Right ventricle myocardium inferior (tissue), 1 donor: ENCODE measurements at regions of chr15 and their contacts with region 1.

Region 1: GRCh38 chr15:38817427-38818156 is 253.0 kb upstream of the RASGRP1 start:
- DNase-seq: peak; percentile 91
- ATAC-seq: peak; percentile 94

Region 2: GRCh38 chr15:38991126-38991525 is 173.5 kb after region 1 on chr15:
- intact Hi-C with region 1: loop called (anchors 5 kb)
- DNase-seq: no peak
- ATAC-seq: no peak

Region 3: GRCh38 chr15:39028069-39028468 is 210.5 kb after region 1 on chr15:
- intact Hi-C with region 1: loop called (anchors 10 kb)
- DNase-seq: no peak
- ATAC-seq: peak; percentile 68

Region 4: GRCh38 chr15:39154227-39154638 is 336.6 kb after region 1 on chr15:
- intact Hi-C with region 1: loop called (anchors 10 kb)
- DNase-seq: no peak
- ATAC-seq: no peak